ENCODE measurements at regions of chr9 and their contacts with region 1.

Region 1: GRCh38 chr9:22008736-22009562 is at the start of gene CDKN2B:
- DNase-seq: peak; percentile 94
- H3K4me3 Mint-ChIP-seq: peak within 1 kb of the TSS; percentile 82
- H3K27ac Mint-ChIP-seq: no peak within 1 kb of the TSS
- H3K4me1 Mint-ChIP-seq: peaks cover 24% of the 10 kb centered on the region
- H3K27me3 Mint-ChIP-seq: peaks cover 73% of the 10 kb centered on the region
- total RNA-seq, gene CDKN2B: 0.21 and 0.33 TPM in 2 replicates

Region 2: DNA sequence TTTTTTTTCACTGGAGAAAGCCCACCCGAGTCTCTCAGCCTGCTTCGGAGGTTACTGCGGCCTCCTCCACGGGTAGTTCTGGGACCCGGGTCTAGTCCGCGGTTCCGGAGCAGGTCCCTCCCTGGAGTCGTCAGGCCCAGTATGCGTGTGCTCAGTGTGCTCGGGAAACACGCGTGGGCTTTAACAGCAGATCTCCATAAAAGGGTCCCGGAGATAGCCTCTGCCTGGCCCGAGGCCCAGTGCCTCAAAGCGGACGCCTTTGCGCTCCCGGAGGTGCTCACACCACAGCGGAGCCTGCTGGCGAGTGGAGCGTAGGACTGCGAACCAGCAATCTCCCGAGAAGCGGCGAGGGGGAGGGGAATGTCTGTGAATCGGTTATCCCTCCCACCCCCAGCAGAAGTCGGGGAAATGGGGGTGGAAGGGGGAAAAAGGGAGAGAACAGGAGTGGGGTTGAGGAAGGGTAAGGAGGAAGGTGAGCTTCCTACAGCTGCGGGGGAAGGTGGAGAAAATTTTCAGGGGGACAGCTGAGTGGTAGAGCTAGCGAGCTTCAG is 43.5 kb before region 1 on chr9:
- intact Hi-C with region 1: loop called (anchors 1 kb)
- DNase-seq: peak; percentile 85
- H3K4me3 Mint-ChIP-seq: peak overlapping the region; percentile 70
- H3K27ac Mint-ChIP-seq: peak overlapping the region; percentile 72
- H3K4me1 Mint-ChIP-seq: peaks cover 31% of the 10 kb centered on the region
- H3K27me3 Mint-ChIP-seq: peaks cover 85% of the 10 kb centered on the region

Region 3: GRCh38 chr9:21974548-21975409 is 34.2 kb before region 1 on chr9:
- intact Hi-C with region 1: loop called (anchors 1 kb)
- DNase-seq: peak; percentile 80
- H3K4me3 Mint-ChIP-seq: peak overlapping the region; percentile 83
- H3K27ac Mint-ChIP-seq: peak overlapping the region; percentile 52
- H3K4me1 Mint-ChIP-seq: peaks cover 21% of the 10 kb centered on the region
- H3K27me3 Mint-ChIP-seq: peaks cover 90% of the 10 kb centered on the region

Region 4: GRCh38 chr9:21995177-21996086 is 13.5 kb before region 1 on chr9:
- intact Hi-C with region 1: loop called (anchors 1 kb)
- DNase-seq: peak; percentile 95
- H3K4me3 Mint-ChIP-seq: peak overlapping the region; percentile 88
- H3K27ac Mint-ChIP-seq: peak overlapping the region; percentile 95
- H3K4me1 Mint-ChIP-seq: peaks cover 29% of the 10 kb centered on the region
- H3K27me3 Mint-ChIP-seq: peaks cover 51% of the 10 kb centered on the region

Region 5: GRCh38 chr9:22037954-22038690 is 29.2 kb after region 1 on chr9:
- intact Hi-C with region 1: loop called (anchors 1 kb)
- DNase-seq: no peak
- H3K4me3 Mint-ChIP-seq: no peak overlapping the region
- H3K27ac Mint-ChIP-seq: no peak overlapping the region
- H3K4me1 Mint-ChIP-seq: peaks cover 26% of the 10 kb centered on the region
- H3K27me3 Mint-ChIP-seq: peaks cover 34% of the 10 kb centered on the region

Region 6: DNA sequence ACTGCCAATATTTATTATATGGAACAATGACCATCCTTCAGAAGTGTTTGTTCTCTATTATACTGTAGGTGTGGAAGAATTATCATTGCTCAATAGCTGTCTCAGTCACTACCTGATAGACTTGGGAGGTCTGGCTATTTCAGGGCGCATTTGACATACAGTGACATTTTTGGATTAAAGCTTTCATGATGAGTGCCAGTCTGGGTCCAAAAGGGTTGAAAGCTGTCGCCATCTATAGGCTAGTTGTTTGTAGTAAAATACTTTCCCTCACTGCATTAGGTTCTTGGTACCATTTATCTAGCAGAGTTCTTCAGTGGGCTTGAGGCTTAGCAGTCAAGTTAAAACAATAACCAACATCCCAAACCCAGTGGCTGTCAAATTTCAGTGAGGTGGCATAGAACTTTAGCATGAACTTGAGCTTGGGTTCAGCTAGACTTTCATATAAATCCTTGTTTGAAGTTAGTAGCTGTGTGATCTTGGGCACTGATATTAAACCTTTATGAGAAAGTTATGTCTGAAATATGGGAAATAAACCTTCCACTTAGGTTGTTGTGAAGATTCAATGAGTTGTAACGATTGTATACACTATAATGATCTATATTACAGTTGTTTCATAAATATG is 110.7 kb after region 1 on chr9:
- intact Hi-C with region 1: loop called (anchors 1 kb)
- DNase-seq: peak; percentile 78
- H3K4me3 Mint-ChIP-seq: no peak overlapping the region
- H3K27ac Mint-ChIP-seq: no peak overlapping the region
- H3K4me1 Mint-ChIP-seq: peaks cover 13% of the 10 kb centered on the region
- H3K27me3 Mint-ChIP-seq: peaks cover 62% of the 10 kb centered on the region

Region 7: GRCh38 chr9:22238809-22239684 is 230.1 kb after region 1 on chr9:
- intact Hi-C with region 1: loop called (anchors 1 kb)
- DNase-seq: no peak
- H3K4me3 Mint-ChIP-seq: no peak overlapping the region
- H3K27ac Mint-ChIP-seq: no peak overlapping the region
- H3K4me1 Mint-ChIP-seq: peaks cover 36% of the 10 kb centered on the region
- H3K27me3 Mint-ChIP-seq: peaks cover 57% of the 10 kb centered on the region